Endothelial cell of umbilical vein (primary cell): ENCODE measurements at regions of chr6 and their contacts with region 1.

Region 1: DNA sequence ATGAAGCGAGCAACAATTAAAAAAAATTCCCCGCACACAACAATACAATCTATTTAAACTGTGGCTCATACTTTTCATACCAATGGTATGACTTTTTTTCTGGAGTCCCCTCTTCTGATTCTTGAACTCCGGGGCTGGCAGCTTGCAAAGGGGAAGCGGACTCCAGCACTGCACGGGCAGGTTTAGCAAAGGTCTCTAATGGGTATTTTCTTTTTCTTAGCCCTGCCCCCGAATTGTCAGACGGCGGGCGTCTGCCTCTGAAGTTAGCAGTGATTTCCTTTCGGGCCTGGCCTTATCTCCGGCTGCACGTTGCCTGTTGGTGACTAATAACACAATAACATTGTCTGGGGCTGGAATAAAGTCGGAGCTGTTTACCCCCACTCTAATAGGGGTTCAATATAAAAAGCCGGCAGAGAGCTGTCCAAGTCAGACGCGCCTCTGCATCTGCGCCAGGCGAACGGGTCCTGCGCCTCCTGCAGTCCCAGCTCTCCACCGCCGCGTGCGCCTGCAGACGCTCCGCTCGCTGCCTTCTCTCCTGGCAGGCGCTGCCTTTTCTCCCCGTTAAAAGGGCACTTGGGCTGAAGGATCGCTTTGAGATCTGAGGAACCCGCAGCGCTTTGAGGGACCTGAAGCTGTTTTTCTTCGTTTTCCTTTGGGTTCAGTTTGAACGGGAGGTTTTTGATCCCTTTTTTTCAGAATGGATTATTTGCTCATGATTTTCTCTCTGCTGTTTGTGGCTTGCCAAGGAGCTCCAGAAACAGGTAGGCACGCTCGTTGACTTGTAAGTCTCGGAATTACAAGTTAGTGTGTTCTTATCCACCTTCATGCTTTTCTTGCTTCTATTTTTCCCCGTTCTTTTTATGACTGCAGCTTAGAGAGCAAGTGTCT is at the start of gene EDN1:
- DNase-seq: peak; percentile 100
- H3K4me3 ChIP-seq: peak within 1 kb of the TSS; percentile 91 to 98 (median 96)
- H3K27ac ChIP-seq: peak within 1 kb of the TSS; percentile 98
- H3K4me1 ChIP-seq: peaks cover 26% of the 10 kb centered on the region
- H3K27me3 ChIP-seq: no peaks in the 10 kb centered on the region
- CTCF ChIP-seq: no peak
- POLR2A ChIP-seq: peak; percentile 100
- total RNA-seq, gene EDN1: 493 and 514 TPM in 2 replicates

Region 2: DNA sequence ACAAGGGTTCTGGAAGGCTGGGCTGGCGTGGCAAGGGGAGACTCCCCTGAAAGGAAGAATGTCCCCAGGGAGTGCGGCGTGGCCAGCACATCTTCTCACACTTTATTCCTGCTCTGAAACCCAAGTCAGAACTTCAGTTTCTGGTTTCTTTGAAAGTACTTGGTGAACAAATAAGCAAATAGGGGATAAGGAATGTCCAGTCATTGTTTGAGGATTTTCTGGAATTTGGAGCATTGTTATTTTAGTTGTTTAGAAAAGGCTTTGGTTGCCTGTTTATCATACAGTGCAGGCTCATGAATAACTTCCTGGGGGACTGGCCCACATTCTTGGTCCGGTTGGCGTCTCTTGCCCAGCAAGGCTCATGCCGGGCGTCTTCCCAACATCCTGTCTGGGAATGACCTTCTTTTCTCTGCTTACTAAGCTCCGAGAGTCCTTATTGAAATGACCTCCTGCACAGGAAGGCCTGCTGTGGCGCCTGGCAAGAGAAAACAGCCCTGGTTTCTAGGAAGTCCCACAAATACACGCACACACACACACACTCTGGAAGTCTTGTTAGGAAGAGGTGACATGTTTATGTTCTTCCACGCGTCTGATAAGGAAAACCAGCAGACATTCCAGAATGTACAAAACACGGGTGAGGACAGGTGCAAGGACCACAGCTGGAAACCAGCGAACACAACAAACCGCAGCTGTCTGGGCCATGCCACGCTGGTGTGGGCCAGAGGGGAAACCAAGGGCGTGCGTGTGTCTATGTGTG is 680.7 kb before region 1 on chr6:
- CTCF ChIA-PET with region 1: interaction called, 38 read pairs
- POLR2A ChIA-PET with region 1: interaction called, 111 read pairs
- dilution Hi-C with region 1: loop called (anchors 25 kb)
- intact Hi-C with region 1: loop called (anchors 1 kb)
- DNase-seq: peak; percentile 99
- H3K4me3 ChIP-seq: peak overlapping the region in 2 of 3 experiments; percentile 30 to 86
- H3K27ac ChIP-seq: peak overlapping the region; percentile 99
- H3K4me1 ChIP-seq: peaks cover 78% of the 10 kb centered on the region
- H3K27me3 ChIP-seq: no peaks in the 10 kb centered on the region
- CTCF ChIP-seq: no peak
- POLR2A ChIP-seq: no peak

Region 3: GRCh38 chr6:11770546-11771466 is 519.4 kb before region 1 on chr6:
- CTCF ChIA-PET with region 1: interaction called, 4 read pairs
- POLR2A ChIA-PET with region 1: interaction called, 5 read pairs
- dilution Hi-C with region 1: loop called (anchors 25 kb)
- intact Hi-C with region 1: loop called (anchors 1 kb)
- DNase-seq: peak; percentile 93
- H3K4me3 ChIP-seq: no peak overlapping the region
- H3K27ac ChIP-seq: peak overlapping the region; percentile 94
- H3K4me1 ChIP-seq: peaks cover 58% of the 10 kb centered on the region
- H3K27me3 ChIP-seq: no peaks in the 10 kb centered on the region
- CTCF ChIP-seq: no peak
- POLR2A ChIP-seq: peak; percentile 84

Region 4: GRCh38 chr6:12150812-12151432 is 139.3 kb before region 1 on chr6:
- CTCF ChIA-PET with region 1: interaction called, 3 read pairs
- POLR2A ChIA-PET with region 1: no interaction called
- dilution Hi-C with region 1: no loop called
- intact Hi-C with region 1: loop called (anchors 2 kb)
- DNase-seq: no peak
- H3K4me3 ChIP-seq: no peak overlapping the region
- H3K27ac ChIP-seq: no peak overlapping the region
- H3K4me1 ChIP-seq: peaks cover 24% of the 10 kb centered on the region
- H3K27me3 ChIP-seq: no peaks in the 10 kb centered on the region
- CTCF ChIP-seq: peak in 1 of 2 donors; percentile 28
- POLR2A ChIP-seq: no peak

Region 5: DNA sequence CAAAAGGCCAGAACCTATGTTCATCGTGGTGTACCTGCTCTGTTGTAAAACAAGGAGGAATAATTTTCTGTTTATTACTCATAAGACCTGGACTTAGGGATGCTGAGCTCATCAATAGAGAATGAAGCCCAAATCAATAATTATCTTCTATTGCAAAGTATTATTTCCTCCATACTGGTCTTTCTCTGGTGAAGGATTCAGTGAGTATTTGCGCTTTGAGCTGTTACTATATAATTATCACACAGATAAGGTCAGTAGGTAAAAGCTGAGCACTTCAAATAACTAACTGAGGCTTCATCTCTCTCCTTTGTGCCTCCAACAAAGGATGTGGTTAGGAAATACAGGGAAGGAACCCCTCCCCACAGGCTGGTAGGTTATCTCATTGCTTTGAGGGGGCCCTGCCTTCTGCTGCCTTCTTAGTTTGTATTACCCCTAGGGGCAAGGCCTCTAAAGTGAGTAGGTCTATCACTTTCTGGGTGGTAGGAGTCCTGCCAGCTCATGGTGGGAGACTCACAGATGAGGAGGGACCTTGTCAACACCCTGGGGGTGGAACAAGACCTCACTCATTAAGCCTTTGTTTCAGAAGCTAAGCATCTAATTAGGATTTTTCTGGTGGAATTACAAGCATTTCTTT is 34.5 kb after region 1 on chr6:
- CTCF ChIA-PET with region 1: interaction called, 3 read pairs
- POLR2A ChIA-PET with region 1: interaction called, 11 read pairs
- dilution Hi-C with region 1: no loop called
- intact Hi-C with region 1: no loop called
- DNase-seq: no peak
- H3K4me3 ChIP-seq: no peak overlapping the region
- H3K27ac ChIP-seq: peak overlapping the region; percentile 60
- H3K4me1 ChIP-seq: peaks cover 17% of the 10 kb centered on the region
- H3K27me3 ChIP-seq: no peaks in the 10 kb centered on the region
- CTCF ChIP-seq: no peak
- POLR2A ChIP-seq: peak; percentile 40

Region 6: DNA sequence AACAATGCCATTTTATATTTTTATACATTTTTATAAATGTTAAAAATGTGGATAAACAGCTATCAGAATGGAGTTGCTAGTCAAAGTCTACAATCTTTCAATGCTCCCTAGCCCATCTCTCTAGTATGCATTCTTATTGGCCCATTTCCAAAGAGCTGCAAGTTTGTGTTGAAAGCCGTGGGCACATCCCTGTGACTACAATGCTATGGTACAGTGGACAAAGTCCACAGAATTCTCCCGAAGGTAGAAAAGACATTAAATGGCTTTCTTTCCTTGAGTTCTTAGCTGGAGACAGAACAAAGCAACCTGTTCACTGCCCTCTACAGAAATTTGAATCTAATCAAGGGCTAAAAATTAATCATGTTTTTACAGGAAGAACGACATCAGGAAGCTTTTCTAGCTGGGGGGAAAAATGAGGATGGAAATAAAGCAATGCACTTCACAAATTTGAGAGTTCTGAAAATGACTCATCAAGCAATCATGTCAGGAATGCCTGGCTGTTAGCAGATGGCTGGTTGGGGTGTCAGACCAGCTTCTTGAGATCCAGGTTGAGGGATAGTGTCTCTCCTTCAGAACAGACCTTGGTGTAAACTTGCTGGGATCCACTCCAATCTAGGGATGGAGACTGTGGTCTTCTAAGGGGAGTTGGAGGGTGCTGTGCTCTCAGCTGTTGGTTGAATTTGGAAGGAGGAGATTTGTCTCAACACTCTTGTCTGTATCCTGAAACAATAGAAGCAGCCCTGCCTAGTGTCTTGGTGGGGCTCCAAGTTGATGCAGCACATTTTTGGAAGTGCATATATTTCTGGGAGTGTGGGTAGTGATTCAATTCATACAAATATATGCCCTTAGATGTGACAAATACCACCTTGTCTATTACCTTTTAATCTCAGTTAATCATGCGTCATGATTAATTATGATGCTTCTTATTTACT is 283.0 kb after region 1 on chr6:
- CTCF ChIA-PET with region 1: interaction called, 10 read pairs
- POLR2A ChIA-PET with region 1: interaction called, 3 read pairs
- dilution Hi-C with region 1: no loop called
- intact Hi-C with region 1: no loop called
- DNase-seq: peak; percentile 92
- H3K4me3 ChIP-seq: peak overlapping the region in 1 of 3 experiments; percentile 13
- H3K27ac ChIP-seq: peak overlapping the region; percentile 92
- H3K4me1 ChIP-seq: peaks cover 75% of the 10 kb centered on the region
- H3K27me3 ChIP-seq: no peaks in the 10 kb centered on the region
- CTCF ChIP-seq: no peak
- POLR2A ChIP-seq: no peak